PC-9 (cell line): ENCODE measurements at regions of chr7 and their contacts with region 1.

Region 1: GRCh38 chr7:143380255-143380645 is 895 bp upstream of the ZYX start:
- DNase-seq: peak; percentile 75 to 89
- H3K4me3 ChIP-seq: peak overlapping the region; percentile 74
- H3K27ac ChIP-seq: peak overlapping the region; percentile 89
- H3K4me1 ChIP-seq: peaks cover 31% of the 10 kb centered on the region
- H3K27me3 ChIP-seq: no peaks in the 10 kb centered on the region
- CTCF ChIP-seq: peak; percentile 99

Region 2: GRCh38 chr7:142880876-142881505 is 499.3 kb before region 1 on chr7:
- CTCF ChIA-PET with region 1: no interaction called
- POLR2A ChIA-PET with region 1: no interaction called
- intact Hi-C with region 1: loop called (anchors 5 kb)
- DNase-seq: peak in 1 of 2 experiments; percentile 46
- H3K4me3 ChIP-seq: no peak overlapping the region
- H3K27ac ChIP-seq: no peak overlapping the region
- H3K4me1 ChIP-seq: peaks cover 33% of the 10 kb centered on the region
- H3K27me3 ChIP-seq: no peaks in the 10 kb centered on the region
- CTCF ChIP-seq: peak; percentile 91

Region 3: GRCh38 chr7:143263266-143264195 is 116.7 kb before region 1 on chr7 and contains the start of gene GSTK1:
- CTCF ChIA-PET with region 1: interaction called, 7 read pairs
- POLR2A ChIA-PET with region 1: interaction called, 21 read pairs
- intact Hi-C with region 1: no loop called
- DNase-seq: peak; percentile 68 to 81
- H3K4me3 ChIP-seq: peak within 1 kb of the TSS; percentile 90
- H3K27ac ChIP-seq: peak within 1 kb of the TSS; percentile 36
- H3K4me1 ChIP-seq: peaks cover 48% of the 10 kb centered on the region
- H3K27me3 ChIP-seq: no peaks in the 10 kb centered on the region
- CTCF ChIP-seq: no peak
- total RNA-seq, gene GSTK1: 239 and 244 TPM in 2 replicates

Region 4: GRCh38 chr7:143305423-143306070 is 74.7 kb before region 1 on chr7:
- CTCF ChIA-PET with region 1: interaction called, 10 read pairs
- POLR2A ChIA-PET with region 1: interaction called, 3 read pairs
- intact Hi-C with region 1: loop called (anchors 2 kb)
- DNase-seq: peak in 1 of 2 experiments; percentile 72
- H3K4me3 ChIP-seq: no peak overlapping the region
- H3K27ac ChIP-seq: no peak overlapping the region
- H3K4me1 ChIP-seq: no peaks in the 10 kb centered on the region
- H3K27me3 ChIP-seq: no peaks in the 10 kb centered on the region
- CTCF ChIP-seq: peak; percentile 91

Region 5: GRCh38 chr7:143408686-143409561 is 28.7 kb after region 1 on chr7 and contains the start of gene EPHA1:
- CTCF ChIA-PET with region 1: interaction called, 5 read pairs
- POLR2A ChIA-PET with region 1: no interaction called
- intact Hi-C with region 1: loop called (anchors 1 kb)
- DNase-seq: peak; percentile 76 to 89
- H3K4me3 ChIP-seq: peak within 1 kb of the TSS; percentile 96
- H3K27ac ChIP-seq: peak within 1 kb of the TSS; percentile 33
- H3K4me1 ChIP-seq: peaks cover 23% of the 10 kb centered on the region
- H3K27me3 ChIP-seq: no peaks in the 10 kb centered on the region
- CTCF ChIP-seq: peak; percentile 83
- total RNA-seq, gene EPHA1: 35.5 and 39.3 TPM in 2 replicates

Region 6: DNA sequence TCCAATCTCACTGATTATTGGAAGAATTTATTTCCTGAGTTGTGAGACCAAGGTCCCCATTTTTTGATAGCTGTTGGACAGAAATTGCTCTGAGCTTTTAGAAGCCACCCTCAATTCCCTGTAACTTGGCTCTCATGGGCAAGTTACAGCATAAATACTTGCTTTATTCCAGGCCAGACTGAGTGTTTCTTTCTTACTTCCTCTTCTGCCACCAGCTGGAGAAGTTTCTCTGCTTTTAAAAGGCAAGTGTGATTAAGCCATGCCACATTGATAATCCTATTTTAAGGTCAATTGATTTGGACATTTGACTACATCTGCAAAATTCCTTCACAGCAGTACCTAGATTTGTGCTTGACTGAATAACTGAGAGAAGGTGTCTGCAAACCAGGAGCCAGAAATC is 83.3 kb after region 1 on chr7:
- CTCF ChIA-PET with region 1: no interaction called
- POLR2A ChIA-PET with region 1: no interaction called
- intact Hi-C with region 1: no loop called
- DNase-seq: no peak
- H3K4me3 ChIP-seq: no peak overlapping the region
- H3K27ac ChIP-seq: no peak overlapping the region
- H3K4me1 ChIP-seq: peaks cover 13% of the 10 kb centered on the region
- H3K27me3 ChIP-seq: no peaks in the 10 kb centered on the region
- CTCF ChIP-seq: no peak